ENCODE measurements at regions of chr1 and their contacts with region 1.

Region 1: GRCh38 chr1:180631766-180632325 is at the start of gene XPR1:
- DNase-seq: peak; percentile 99
- H3K4me3 ChIP-seq: peak within 1 kb of the TSS; percentile 90 to 92
- H3K27ac ChIP-seq: peak within 1 kb of the TSS; percentile 91 to 92
- H3K4me1 ChIP-seq: no peaks in the 10 kb centered on the region
- H3K27me3 ChIP-seq: no peaks in the 10 kb centered on the region
- CTCF ChIP-seq: peak in 3 of 4 experiments; percentile 23 to 52 (median 51)
- POLR2A ChIP-seq: peak; percentile 97
- total RNA-seq, gene XPR1: 17.5 to 70.3 TPM

Region 2: DNA sequence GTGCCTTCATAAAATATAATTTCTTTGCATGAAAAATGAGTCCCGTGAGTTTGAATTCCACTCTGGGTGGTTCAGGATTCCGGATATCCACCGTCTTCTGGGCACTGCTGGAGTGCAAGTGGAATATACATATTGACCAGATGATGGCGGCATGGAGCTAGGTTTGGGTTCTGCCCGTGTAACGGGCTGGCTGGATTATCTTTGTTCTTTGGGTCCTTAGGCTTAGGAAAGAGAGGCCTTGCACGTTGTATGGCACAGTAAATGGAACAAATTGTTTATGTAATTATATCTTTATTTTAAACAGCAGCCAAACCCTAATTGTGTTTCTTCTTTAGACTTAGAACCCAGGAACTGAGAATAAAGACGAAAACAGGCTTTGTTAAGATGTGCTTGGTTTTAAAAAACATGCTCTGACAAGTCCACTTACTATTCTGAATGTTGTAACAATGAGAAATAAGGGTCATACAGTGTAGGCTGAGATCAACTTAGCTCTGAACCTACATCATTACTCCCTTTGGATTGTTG is 115.9 kb before region 1 on chr1:
- intact Hi-C with region 1: no loop called
- DNase-seq: peak; percentile 73
- H3K4me3 ChIP-seq: no peak overlapping the region
- H3K27ac ChIP-seq: no peak overlapping the region
- H3K4me1 ChIP-seq: no peaks in the 10 kb centered on the region
- H3K27me3 ChIP-seq: no peaks in the 10 kb centered on the region
- CTCF ChIP-seq: peak; percentile 43 to 83 (median 80)
- POLR2A ChIP-seq: no peak

Region 3: DNA sequence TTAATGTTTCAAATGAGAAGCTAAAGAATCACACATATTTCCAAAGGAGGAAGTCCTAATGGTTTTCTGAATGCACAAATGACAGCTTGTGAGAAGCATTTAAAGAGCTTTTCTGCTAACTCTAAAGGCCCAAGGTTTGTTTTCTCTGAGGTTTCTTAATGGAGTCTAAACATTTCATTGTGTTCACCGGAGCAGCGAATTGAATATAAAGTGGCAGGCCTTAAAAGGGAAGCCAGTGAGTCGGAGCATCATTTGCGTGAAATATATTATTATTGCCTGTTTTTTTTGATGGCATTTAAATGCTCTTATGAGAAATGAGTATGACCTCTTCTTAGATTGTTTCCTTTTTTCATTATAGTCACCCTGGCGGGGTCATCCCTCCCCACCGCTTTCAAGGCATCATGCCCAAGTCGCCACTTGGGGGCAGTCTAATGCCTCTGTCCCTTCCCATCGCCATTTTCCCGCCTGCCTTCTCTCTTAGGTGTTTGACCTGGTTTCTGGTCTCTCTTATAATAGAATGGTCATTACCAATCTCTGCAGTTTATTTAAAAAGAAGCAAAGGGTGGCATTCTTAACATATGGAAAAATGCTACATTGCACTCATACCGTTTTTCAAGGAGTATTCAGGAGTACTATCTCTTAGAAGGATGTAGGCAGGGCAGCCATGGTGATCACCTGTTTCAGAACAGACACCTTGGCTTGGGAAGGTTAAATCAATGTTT is 98.4 kb before region 1 on chr1:
- intact Hi-C with region 1: loop called (anchors 5 kb)
- DNase-seq: peak; percentile 36
- H3K4me3 ChIP-seq: no peak overlapping the region
- H3K27ac ChIP-seq: no peak overlapping the region
- H3K4me1 ChIP-seq: peaks cover 3% of the 10 kb centered on the region
- H3K27me3 ChIP-seq: no peaks in the 10 kb centered on the region
- CTCF ChIP-seq: peak in 3 of 4 experiments; percentile 58 to 67 (median 61)
- POLR2A ChIP-seq: no peak

Region 4: GRCh38 chr1:180863158-180863775 is 231.4 kb after region 1 on chr1:
- intact Hi-C with region 1: loop called (anchors 5 kb)
- DNase-seq: peak; percentile 27
- H3K4me3 ChIP-seq: no peak overlapping the region
- H3K27ac ChIP-seq: no peak overlapping the region
- H3K4me1 ChIP-seq: no peaks in the 10 kb centered on the region
- H3K27me3 ChIP-seq: no peaks in the 10 kb centered on the region
- CTCF ChIP-seq: peak; percentile 46 to 90 (median 82)
- POLR2A ChIP-seq: no peak

Region 5: GRCh38 chr1:181021811-181022434 is 390.1 kb after region 1 on chr1:
- intact Hi-C with region 1: loop called (anchors 10 kb)
- DNase-seq: peak; percentile 70
- H3K4me3 ChIP-seq: peak overlapping the region; percentile 67 to 91
- H3K27ac ChIP-seq: peak overlapping the region; percentile 79 to 88
- H3K4me1 ChIP-seq: no peaks in the 10 kb centered on the region
- H3K27me3 ChIP-seq: no peaks in the 10 kb centered on the region
- CTCF ChIP-seq: no peak
- POLR2A ChIP-seq: peak; percentile 24

Region 6: DNA sequence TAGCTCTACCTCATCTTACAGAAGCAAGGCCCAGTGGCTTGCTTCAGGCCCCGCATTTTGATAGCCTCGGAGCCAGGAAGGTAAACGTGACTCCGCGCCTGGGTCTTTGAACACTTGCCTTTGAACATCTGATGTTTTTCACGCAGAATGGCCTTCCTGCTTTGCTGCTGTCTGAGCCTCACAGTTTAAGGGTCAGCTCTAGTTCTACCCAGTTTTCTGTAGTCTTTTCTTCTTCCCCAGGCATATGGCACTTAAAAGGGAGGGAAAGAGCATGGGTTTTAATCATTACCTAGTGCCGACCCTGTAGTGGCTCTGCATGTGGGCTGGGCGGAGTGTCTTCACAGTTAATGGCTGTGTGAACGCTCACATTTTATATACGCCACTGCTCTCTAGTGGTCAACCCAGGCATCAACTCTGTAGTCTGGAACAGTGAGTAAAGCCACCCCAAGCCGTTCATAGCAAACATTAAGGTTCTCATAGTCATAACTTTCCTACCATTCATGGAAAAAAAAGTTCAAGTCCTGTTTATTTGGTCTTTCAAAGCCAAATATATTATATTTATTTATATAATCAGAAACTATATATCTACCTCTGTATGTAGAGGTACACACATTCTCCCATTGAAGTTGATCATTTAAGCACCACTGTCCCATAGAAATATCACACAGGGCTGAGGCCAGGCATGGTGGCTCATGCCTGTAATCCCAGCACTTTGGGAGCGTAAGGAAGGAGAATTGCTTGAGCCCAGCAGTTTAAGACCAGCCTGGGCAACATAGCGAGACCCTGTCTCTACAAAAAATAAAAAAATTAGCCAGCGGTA is 534.7 kb after region 1 on chr1:
- intact Hi-C with region 1: loop called (anchors 10 kb)
- DNase-seq: peak; percentile 43
- H3K4me3 ChIP-seq: no peak overlapping the region
- H3K27ac ChIP-seq: no peak overlapping the region
- H3K4me1 ChIP-seq: no peaks in the 10 kb centered on the region
- H3K27me3 ChIP-seq: no peaks in the 10 kb centered on the region
- CTCF ChIP-seq: peak; percentile 40 to 85 (median 74)
- POLR2A ChIP-seq: no peak